Upper lobe of right lung (tissue), 1 donor: ENCODE measurements at regions of chr11 and their contacts with region 1.

Region 1: DNA sequence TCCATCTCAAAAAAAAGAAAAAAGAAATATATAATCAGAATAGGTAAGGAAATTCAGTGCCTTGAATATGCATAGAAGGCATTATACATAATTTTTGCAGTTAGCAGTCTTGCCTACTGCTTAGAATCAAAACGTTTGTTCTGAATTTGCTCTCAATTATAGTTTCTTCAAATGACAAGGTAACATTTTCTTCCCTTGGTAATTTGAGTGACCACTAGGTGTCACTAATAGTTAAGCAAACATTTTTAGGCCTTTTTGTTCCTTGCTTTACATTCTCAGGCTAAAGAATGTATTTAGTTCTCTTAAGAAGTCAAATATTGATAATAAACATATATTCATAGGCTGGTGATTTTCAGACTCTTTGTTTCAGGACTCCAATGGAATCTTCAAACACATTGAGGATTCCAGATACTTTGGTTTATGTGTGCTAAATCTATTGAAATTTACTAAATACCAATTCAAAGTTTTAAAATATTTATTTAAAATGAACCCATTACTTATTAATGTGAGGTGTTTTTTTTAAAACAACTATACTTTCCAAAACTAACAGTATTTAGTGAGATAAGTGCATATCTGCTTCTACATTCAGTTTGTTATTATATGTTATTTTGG is 55.0 kb upstream of the DEPDC7 start:
- DNase-seq: no peak
- ATAC-seq: peak; percentile 66
- H3K4me3 ChIP-seq: no peak overlapping the region
- H3K27ac ChIP-seq: no peak overlapping the region
- H3K4me1 ChIP-seq: no peaks in the 10 kb centered on the region
- H3K27me3 ChIP-seq: no peaks in the 10 kb centered on the region
- CTCF ChIP-seq: peak; percentile 75

Region 2: GRCh38 chr11:33063326-33063881 is 102.7 kb after region 1 on chr11:
- intact Hi-C with region 1: loop called (anchors 5 kb)
- DNase-seq: no peak
- ATAC-seq: no peak
- H3K4me3 ChIP-seq: no peak overlapping the region
- H3K27ac ChIP-seq: no peak overlapping the region
- H3K4me1 ChIP-seq: no peaks in the 10 kb centered on the region
- H3K27me3 ChIP-seq: no peaks in the 10 kb centered on the region
- CTCF ChIP-seq: no peak

Region 3: GRCh38 chr11:33310720-33311500 is 350.3 kb after region 1 on chr11:
- intact Hi-C with region 1: no loop called
- DNase-seq: no peak
- ATAC-seq: no peak
- H3K4me3 ChIP-seq: no peak overlapping the region
- H3K27ac ChIP-seq: no peak overlapping the region
- H3K4me1 ChIP-seq: peaks cover 14% of the 10 kb centered on the region
- H3K27me3 ChIP-seq: no peaks in the 10 kb centered on the region
- CTCF ChIP-seq: no peak

Region 4: GRCh38 chr11:33500861-33501479 is 540.3 kb after region 1 on chr11:
- intact Hi-C with region 1: no loop called
- DNase-seq: no peak
- ATAC-seq: no peak
- H3K4me3 ChIP-seq: no peak overlapping the region
- H3K27ac ChIP-seq: no peak overlapping the region
- H3K4me1 ChIP-seq: no peaks in the 10 kb centered on the region
- H3K27me3 ChIP-seq: no peaks in the 10 kb centered on the region
- CTCF ChIP-seq: no peak